PC-9 (cell line): ENCODE measurements at regions of chr13 and their contacts with region 1.

Region 1: DNA sequence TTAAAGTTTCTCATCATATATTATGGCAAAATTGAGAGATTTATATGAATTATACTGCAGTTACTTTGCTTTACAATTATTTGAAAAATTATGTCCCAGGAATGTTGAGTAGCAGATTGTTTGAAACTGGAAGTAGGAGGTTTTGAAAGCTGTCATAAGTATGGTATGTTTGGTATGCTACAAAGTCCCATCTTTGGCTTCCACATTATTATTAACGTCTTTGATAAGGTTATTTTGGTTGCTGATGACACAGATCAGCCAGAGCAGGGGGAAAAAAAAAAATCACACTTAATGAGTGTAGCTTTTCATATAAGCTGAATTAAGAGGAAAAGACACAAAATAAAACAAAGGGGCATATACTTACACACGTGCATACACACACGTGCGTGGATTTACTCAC is 130.1 kb downstream of the SLITRK1 start:
- DNase-seq: peak in 1 of 2 experiments; percentile 45
- H3K4me3 ChIP-seq: no peak overlapping the region
- H3K27ac ChIP-seq: no peak overlapping the region
- H3K4me1 ChIP-seq: no peaks in the 10 kb centered on the region
- H3K27me3 ChIP-seq: no peaks in the 10 kb centered on the region
- CTCF ChIP-seq: no peak

Region 2: GRCh38 chr13:83549671-83550070 is 202.5 kb before region 1 on chr13:
- CTCF ChIA-PET with region 1: no interaction called
- POLR2A ChIA-PET with region 1: no interaction called
- intact Hi-C with region 1: loop called (anchors 5 kb)
- DNase-seq: no peak
- H3K4me3 ChIP-seq: no peak overlapping the region
- H3K27ac ChIP-seq: no peak overlapping the region
- H3K4me1 ChIP-seq: no peaks in the 10 kb centered on the region
- H3K27me3 ChIP-seq: no peaks in the 10 kb centered on the region
- CTCF ChIP-seq: no peak

Region 3: DNA sequence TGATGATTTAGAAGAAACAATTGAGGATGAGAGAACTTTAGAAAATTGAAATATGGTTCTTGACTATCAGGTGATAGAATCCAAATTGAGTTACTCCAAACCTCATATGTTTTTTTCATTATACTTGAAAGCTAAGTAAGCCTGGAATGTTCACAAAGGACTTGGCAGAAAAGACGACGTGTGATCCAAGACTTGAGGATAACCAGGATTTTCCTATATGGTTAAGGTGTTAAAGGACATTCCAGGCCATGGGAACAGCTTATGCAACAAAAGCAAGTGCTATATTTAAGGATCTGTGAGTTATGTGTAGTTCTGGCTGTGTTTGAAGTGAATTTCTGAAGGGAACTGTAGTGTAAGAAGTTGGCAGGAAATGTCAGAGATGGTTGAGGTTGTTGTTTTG is 77.7 kb after region 1 on chr13:
- CTCF ChIA-PET with region 1: no interaction called
- POLR2A ChIA-PET with region 1: no interaction called
- intact Hi-C with region 1: loop called (anchors 5 kb)
- DNase-seq: no peak
- H3K4me3 ChIP-seq: no peak overlapping the region
- H3K27ac ChIP-seq: no peak overlapping the region
- H3K4me1 ChIP-seq: no peaks in the 10 kb centered on the region
- H3K27me3 ChIP-seq: no peaks in the 10 kb centered on the region
- CTCF ChIP-seq: no peak